ENCODE measurements at regions of chr14 and their contacts with region 1.

Region 1: GRCh38 chr14:54857830-54858269 is 44.8 kb downstream of the GCH1 start:
- DNase-seq: no peak
- ATAC-seq: peak; percentile 55 to 88 (median 84)
- H3K4me3 ChIP-seq: no peak overlapping the region
- H3K27ac ChIP-seq: peak overlapping the region in 3 of 10 donors; percentile 31 to 74 (median 46)
- H3K4me1 ChIP-seq: peaks cover 0 to 30% (median 5%) of the 10 kb centered on the region in 9 donors
- H3K27me3 ChIP-seq: no peaks in the 10 kb centered on the region
- CTCF ChIP-seq: no peak

Region 2: GRCh38 chr14:54828037-54828436 is 29.8 kb before region 1 on chr14:
- intact Hi-C with region 1: loop called in 1 of 10 experiments (anchors 1 kb)
- DNase-seq: no peak
- ATAC-seq: no peak
- H3K4me3 ChIP-seq: no peak overlapping the region
- H3K27ac ChIP-seq: no peak overlapping the region
- H3K4me1 ChIP-seq: no peaks in the 10 kb centered on the region
- H3K27me3 ChIP-seq: peaks cover 0 to 6% (median 0%) of the 10 kb centered on the region in 7 donors
- CTCF ChIP-seq: no peak

Measured in heart right ventricle (tissue), 16 donors.